ENCODE measurements at regions of chrX and their contacts with region 1.

Region 1: DNA sequence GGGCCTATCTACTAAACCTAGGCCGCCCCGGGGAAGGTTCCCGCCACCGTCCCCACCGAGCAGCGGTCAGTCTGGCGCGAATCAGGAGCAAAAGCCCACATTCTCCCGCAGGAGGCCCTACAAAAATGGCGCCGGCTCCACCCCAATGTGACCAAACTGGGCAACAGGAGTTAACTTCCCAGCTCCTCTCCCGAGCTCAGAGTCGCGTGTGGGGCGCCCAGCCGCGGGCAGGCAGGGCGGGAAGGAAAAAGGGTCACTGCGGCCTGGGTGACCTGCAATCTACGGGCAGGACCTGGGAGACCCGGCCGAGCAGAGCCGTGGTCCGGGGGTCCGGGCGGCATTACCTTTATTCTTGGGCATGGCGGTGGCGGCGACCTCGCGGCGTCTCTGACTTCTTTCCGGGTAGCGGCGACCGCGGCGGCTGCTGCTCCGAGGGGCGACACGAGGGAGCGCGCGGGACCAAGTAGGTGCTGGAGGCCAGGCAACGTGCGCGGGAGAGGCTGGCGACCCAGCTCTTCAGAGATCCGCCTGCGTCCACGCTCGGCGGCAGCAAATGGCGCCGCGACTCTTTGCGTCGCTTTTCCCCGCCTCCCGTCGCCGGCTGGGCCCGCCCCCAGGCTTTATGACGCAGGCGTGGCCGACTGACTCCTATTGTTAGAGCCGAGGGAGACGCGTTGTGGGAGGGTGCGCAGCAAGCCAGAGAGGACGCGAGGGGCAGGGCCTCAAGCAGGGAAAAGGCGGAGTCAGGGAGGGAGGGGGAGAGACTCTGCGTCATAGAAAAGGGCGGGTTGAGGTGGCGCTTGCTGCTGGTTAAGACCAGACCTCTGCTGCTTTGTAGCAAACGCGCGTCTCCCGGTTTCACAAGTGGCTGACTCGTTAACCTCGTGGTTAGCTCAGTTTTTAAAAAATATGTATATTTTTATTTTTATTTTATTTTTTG is at the start of gene EIF1AX:
- DNase-seq: peak; percentile 97 to 99 (median 99)
- H3K4me3 ChIP-seq: peak within 1 kb of the TSS; percentile 57 to 95 (median 85)
- H3K27ac ChIP-seq: peak within 1 kb of the TSS in 54 of 59 donors; percentile 10 to 92 (median 77)
- H3K27me3 ChIP-seq: peaks cover 0 to 13% (median 0%) of the 10 kb centered on the region in 45 donors
- CTCF ChIP-seq: peak in 14 of 56 donors; percentile 2 to 46 (median 21)
- total RNA-seq, gene EIF1AX: 35.6 to 115 (median 87.7) TPM

Region 2: GRCh38 chrX:19990556-19991349 is 150.8 kb before region 1 on chrX and contains the start of gene BCLAF3:
- intact Hi-C with region 1: loop called in 1 of 2 experiments (anchors 10 kb)
- DNase-seq: peak; percentile 65 to 90 (median 83)
- H3K4me3 ChIP-seq: peak within 1 kb of the TSS; percentile 46 to 82 (median 70)
- H3K27ac ChIP-seq: peak within 1 kb of the TSS in 49 of 59 donors; percentile 17 to 90 (median 71)
- H3K27me3 ChIP-seq: peaks cover 0 to 30% (median 5%) of the 10 kb centered on the region in 45 donors
- CTCF ChIP-seq: peak; percentile 47 to 88 (median 76)
- total RNA-seq, gene BCLAF3: 15.5 to 27.7 (median 21.4) TPM

Region 3: GRCh38 chrX:20547611-20548051 is 406.1 kb after region 1 on chrX:
- intact Hi-C with region 1: no loop called
- DNase-seq: peak in 4 of 10 donors; percentile 21 to 45 (median 36)
- H3K4me3 ChIP-seq: no peak overlapping the region
- H3K27ac ChIP-seq: peak overlapping the region in 1 of 59 donors; percentile 14
- H3K27me3 ChIP-seq: peaks cover 0 to 36% (median 5%) of the 10 kb centered on the region in 45 donors
- CTCF ChIP-seq: no peak

Region 4: GRCh38 chrX:21255032-21255618 is 1113.6 kb after region 1 on chrX:
- intact Hi-C with region 1: no loop called
- DNase-seq: no peak
- H3K4me3 ChIP-seq: no peak overlapping the region
- H3K27ac ChIP-seq: no peak overlapping the region
- H3K27me3 ChIP-seq: peaks cover 0 to 24% (median 0%) of the 10 kb centered on the region in 45 donors
- CTCF ChIP-seq: no peak

Measured in dorsolateral prefrontal cortex (tissue), 120 donors.